H1 (cell line): ENCODE measurements at regions of chr10 and their contacts with region 1.

Region 1: DNA sequence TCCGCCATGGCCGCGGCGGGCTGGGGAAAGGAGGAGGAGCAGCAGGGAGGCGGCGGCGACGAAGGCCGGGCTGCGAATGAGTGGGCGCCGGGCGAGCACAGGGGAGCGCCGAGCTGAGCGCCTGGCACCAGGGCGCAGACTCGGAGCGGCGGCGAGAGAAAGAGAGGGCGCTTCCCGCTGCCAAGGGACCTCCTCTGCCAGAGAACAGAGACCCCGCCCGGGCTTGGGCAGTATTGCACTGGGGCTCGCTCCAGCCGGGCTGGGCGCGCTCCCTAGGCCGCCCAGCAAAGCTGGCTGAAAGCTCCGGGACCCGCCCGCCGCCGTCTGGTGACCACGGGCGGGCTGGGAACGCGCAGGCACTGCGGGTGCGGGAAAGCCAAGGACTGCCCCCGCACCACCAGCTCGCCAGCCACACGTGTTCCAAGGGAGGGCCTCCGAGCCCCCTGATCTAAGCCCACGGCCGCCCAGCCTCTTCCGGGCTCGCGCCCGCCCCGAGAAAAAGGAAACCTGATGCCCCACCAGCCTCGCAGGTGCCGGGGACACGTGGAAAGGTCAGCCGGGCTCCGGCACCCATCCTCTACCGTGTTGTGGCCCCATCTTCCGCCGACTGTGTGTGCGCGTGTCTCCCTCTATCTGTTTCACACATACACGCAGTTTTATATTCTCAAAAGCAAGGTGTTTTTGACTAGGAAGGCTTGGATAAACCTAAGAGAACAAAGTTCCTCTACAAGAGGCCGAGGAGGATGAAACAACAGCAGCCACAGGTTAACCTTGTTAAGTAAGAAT is at the start of gene CCDC6:
- DNase-seq: peak; percentile 51 to 94
- H3K4me3 ChIP-seq: peak within 1 kb of the TSS; percentile 81 to 98 (median 95)
- H3K27ac ChIP-seq: peak within 1 kb of the TSS; percentile 90
- H3K4me1 ChIP-seq: peaks cover 2 to 16% (median 10%) of the 10 kb centered on the region in 4 experiments; a peak in 6 of 7 replicates
- H3K27me3 ChIP-seq: no peaks in the 10 kb centered on the region
- CTCF ChIP-seq: peak; percentile 70 to 77 (median 70)
- EP300 ChIP-seq: no peak
- POLR2A ChIP-seq: peak; percentile 71 to 80
- RAD21 ChIP-seq: peak; percentile 63 to 66
- total RNA-seq, gene CCDC6: 74.4 and 74.8 TPM in 2 replicates

Region 2: GRCh38 chr10:59865101-59865500 is 41.5 kb before region 1 on chr10:
- CTCF ChIA-PET with region 1: interaction called, 34 read pairs
- POLR2A ChIA-PET with region 1: interaction called, 13 read pairs
- DNase-seq: peak in 1 of 2 experiments; percentile 19
- H3K4me3 ChIP-seq: no peak overlapping the region
- H3K27ac ChIP-seq: no peak overlapping the region
- H3K4me1 ChIP-seq: peaks cover 0 to 13% (median 10%) of the 10 kb centered on the region in 4 experiments; a peak in 5 of 7 replicates
- H3K27me3 ChIP-seq: no peaks in the 10 kb centered on the region
- CTCF ChIP-seq: peak in 2 of 3 experiments; percentile 42 to 53; a peak in 3 of 4 replicates
- EP300 ChIP-seq: no peak; a peak in 1 of 3 replicates
- POLR2A ChIP-seq: no peak
- RAD21 ChIP-seq: peak; percentile 75 to 80

Region 3: GRCh38 chr10:59880971-59881510 is 25.6 kb before region 1 on chr10:
- CTCF ChIA-PET with region 1: interaction called, 10 read pairs
- POLR2A ChIA-PET with region 1: interaction called, 9 read pairs
- DNase-seq: no peak
- H3K4me3 ChIP-seq: no peak overlapping the region
- H3K27ac ChIP-seq: no peak overlapping the region
- H3K4me1 ChIP-seq: peaks cover 2 to 14% (median 4%) of the 10 kb centered on the region in 4 experiments; a peak in 3 of 7 replicates
- H3K27me3 ChIP-seq: no peaks in the 10 kb centered on the region
- CTCF ChIP-seq: no peak
- EP300 ChIP-seq: no peak
- POLR2A ChIP-seq: no peak
- RAD21 ChIP-seq: no peak

Region 4: DNA sequence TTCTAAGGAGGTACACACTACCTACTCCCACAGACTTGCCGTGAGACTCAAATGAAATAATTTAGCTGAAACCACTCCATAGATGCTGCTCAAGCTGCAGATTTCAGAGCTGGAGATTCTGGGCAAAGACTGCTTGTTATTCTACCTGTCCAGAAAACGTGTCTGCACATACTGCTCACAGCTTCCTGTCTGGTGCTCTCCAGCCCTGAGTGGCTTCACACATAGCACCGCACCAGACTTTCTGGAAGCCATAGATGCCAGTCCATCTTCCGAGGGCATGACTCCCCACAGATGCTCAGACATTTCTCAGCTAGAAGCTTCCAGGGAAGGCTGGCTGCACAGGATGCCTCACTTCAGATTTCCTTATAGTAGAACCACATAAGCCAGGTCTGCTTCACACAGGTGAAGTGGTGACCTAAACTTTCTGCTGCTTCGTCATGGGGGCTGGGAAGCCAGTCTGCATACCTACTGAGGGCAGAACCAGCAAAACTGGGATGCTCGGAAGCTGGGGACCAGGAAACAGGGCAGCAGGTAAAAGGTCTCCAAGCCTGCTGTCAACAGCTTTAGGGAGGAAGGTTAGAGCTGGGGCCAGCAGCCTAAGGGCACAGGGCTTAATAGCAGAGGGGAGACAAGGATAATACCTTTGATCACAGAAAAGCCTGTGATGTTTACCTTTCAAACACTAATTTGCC is 18.5 kb before region 1 on chr10:
- CTCF ChIA-PET with region 1: interaction called, 17 read pairs
- POLR2A ChIA-PET with region 1: interaction called, 90 read pairs
- DNase-seq: no peak
- H3K4me3 ChIP-seq: no peak overlapping the region
- H3K27ac ChIP-seq: no peak overlapping the region
- H3K4me1 ChIP-seq: peaks cover 0 to 18% (median 10%) of the 10 kb centered on the region in 4 experiments; a peak in 5 of 7 replicates
- H3K27me3 ChIP-seq: no peaks in the 10 kb centered on the region
- CTCF ChIP-seq: no peak
- EP300 ChIP-seq: no peak
- POLR2A ChIP-seq: no peak
- RAD21 ChIP-seq: no peak

Region 5: DNA sequence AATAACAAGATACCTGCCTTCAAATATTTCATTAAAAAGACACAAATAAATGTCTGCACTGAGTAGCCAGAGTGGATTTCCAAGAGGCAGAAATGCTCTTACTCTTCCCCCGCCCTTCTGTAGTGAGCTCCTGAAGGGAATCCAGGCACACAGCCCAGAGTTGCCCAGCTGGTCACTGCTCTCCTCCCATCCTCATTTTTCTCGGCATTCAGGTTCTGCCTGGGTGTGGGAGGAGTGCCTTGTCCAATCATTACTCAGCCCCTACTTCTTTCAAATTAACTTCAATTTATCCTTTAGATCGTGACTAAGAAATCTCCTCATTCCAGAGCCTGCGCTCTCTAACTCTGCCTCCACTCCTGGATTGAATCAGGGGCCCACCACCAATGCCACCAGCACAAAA is 12.5 kb before region 1 on chr10:
- CTCF ChIA-PET with region 1: interaction called, 17 read pairs
- POLR2A ChIA-PET with region 1: interaction called, 90 read pairs
- DNase-seq: no peak
- H3K4me3 ChIP-seq: no peak overlapping the region
- H3K27ac ChIP-seq: no peak overlapping the region
- H3K4me1 ChIP-seq: peaks cover 0 to 16% (median 5%) of the 10 kb centered on the region in 4 experiments; a peak in 6 of 7 replicates
- H3K27me3 ChIP-seq: no peaks in the 10 kb centered on the region
- CTCF ChIP-seq: no peak
- EP300 ChIP-seq: no peak
- POLR2A ChIP-seq: no peak
- RAD21 ChIP-seq: no peak

Region 6: DNA sequence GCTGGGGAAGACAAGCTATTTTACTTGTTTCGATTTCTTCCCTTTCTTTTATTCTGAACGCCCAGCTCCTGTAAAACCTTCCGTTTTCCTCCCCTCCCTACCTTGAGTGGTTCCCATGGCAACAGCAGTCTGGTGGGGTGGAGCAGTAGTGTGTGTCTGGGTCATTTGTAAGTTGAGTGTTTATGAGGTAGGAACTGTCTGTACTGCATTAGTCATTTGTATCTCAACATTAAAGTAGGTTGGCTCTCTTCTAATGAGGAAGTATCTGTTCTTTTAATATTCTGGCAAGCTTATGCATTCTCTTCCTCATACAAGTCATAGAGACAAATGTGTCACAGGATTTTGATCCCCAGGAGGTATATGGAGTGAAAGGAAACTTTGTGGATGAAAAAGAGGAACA is 85.1 kb after region 1 on chr10:
- CTCF ChIA-PET with region 1: interaction called, 6 read pairs
- POLR2A ChIA-PET with region 1: interaction called, 10 read pairs
- DNase-seq: peak in 1 of 2 experiments; percentile 54
- H3K4me3 ChIP-seq: no peak overlapping the region
- H3K27ac ChIP-seq: no peak overlapping the region
- H3K4me1 ChIP-seq: peaks cover 0 to 7% (median 3%) of the 10 kb centered on the region in 4 experiments; a peak in 1 of 7 replicates
- H3K27me3 ChIP-seq: no peaks in the 10 kb centered on the region
- CTCF ChIP-seq: no peak
- EP300 ChIP-seq: no peak
- POLR2A ChIP-seq: no peak
- RAD21 ChIP-seq: no peak